Naive thymus-derived CD4-positive, alpha-beta T cell (primary cell): ENCODE measurements at regions of chr2 and their contacts with region 1.

Region 1: GRCh38 chr2:179218848-179219594 is 45.6 kb downstream of the SESTD1 start:
- DNase-seq: peak in 8 of 9 donors; percentile 12 to 53 (median 34)
- ATAC-seq: peak; percentile 72
- H3K4me3 ChIP-seq: no peak overlapping the region
- H3K4me3 Mint-ChIP-seq: no peak overlapping the region
- H3K27ac ChIP-seq: no peak overlapping the region
- H3K27ac Mint-ChIP-seq: no peak overlapping the region
- H3K4me1 ChIP-seq: no peaks in the 10 kb centered on the region
- H3K4me1 Mint-ChIP-seq: no peaks in the 10 kb centered on the region
- H3K27me3 ChIP-seq: no peaks in the 10 kb centered on the region
- H3K27me3 Mint-ChIP-seq: peaks cover 0 to 7% (median 0%) of the 10 kb centered on the region in 5 donors

Region 2: GRCh38 chr2:179193759-179194394 is 25.1 kb before region 1 on chr2:
- CTCF ChIA-PET with region 1: no interaction called
- POLR2A ChIA-PET with region 1: no interaction called
- intact Hi-C with region 1: loop called (anchors 2 kb)
- DNase-seq: no peak
- ATAC-seq: no peak
- H3K4me3 ChIP-seq: no peak overlapping the region
- H3K4me3 Mint-ChIP-seq: no peak overlapping the region
- H3K27ac ChIP-seq: no peak overlapping the region
- H3K27ac Mint-ChIP-seq: no peak overlapping the region
- H3K4me1 ChIP-seq: no peaks in the 10 kb centered on the region
- H3K4me1 Mint-ChIP-seq: peaks cover 0 to 11% (median 0%) of the 10 kb centered on the region in 7 donors
- H3K27me3 ChIP-seq: no peaks in the 10 kb centered on the region
- H3K27me3 Mint-ChIP-seq: no peaks in the 10 kb centered on the region

Region 3: GRCh38 chr2:179239195-179239594 is 20.2 kb after region 1 on chr2:
- CTCF ChIA-PET with region 1: interaction called, 5 read pairs
- POLR2A ChIA-PET with region 1: no interaction called
- intact Hi-C with region 1: loop called in 1 of 2 experiments (anchors 1 kb)
- DNase-seq: peak in 7 of 9 donors; percentile 0 to 32 (median 22)
- ATAC-seq: peak; percentile 48
- H3K4me3 ChIP-seq: no peak overlapping the region
- H3K4me3 Mint-ChIP-seq: peak overlapping the region in 3 of 10 donors; percentile 10 to 39 (median 18)
- H3K27ac ChIP-seq: no peak overlapping the region
- H3K27ac Mint-ChIP-seq: peak overlapping the region in 2 of 9 donors; percentile 35 to 73
- H3K4me1 ChIP-seq: peaks cover 0 to 4% of the 10 kb centered on the region in 2 donors
- H3K4me1 Mint-ChIP-seq: peaks cover 10 to 49% (median 21%) of the 10 kb centered on the region in 7 donors
- H3K27me3 ChIP-seq: no peaks in the 10 kb centered on the region
- H3K27me3 Mint-ChIP-seq: peaks cover 0 to 10% (median 5%) of the 10 kb centered on the region in 5 donors

Region 4: DNA sequence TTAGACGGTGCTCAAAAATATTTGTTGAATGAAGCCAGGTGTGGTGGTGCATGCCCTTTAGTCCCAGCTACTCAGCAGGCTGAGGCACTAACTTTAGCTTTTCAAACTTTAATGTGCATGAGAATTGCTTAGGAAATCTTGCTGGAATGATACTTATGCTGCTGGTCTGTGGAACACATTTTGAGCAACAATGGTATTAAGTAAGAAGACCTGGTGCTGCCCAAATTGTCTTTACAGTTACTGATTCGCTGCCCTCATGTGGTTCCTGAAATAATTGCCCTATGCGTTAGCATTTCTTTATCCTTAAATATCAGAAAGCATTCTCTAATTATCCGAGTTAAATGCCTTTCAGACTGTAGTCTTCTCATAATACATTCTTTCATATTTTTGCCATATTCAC is 121.6 kb after region 1 on chr2:
- CTCF ChIA-PET with region 1: interaction called, 4 read pairs
- POLR2A ChIA-PET with region 1: no interaction called
- intact Hi-C with region 1: loop called (anchors 1 kb)
- DNase-seq: no peak
- ATAC-seq: no peak
- H3K4me3 ChIP-seq: no peak overlapping the region
- H3K4me3 Mint-ChIP-seq: no peak overlapping the region
- H3K27ac ChIP-seq: no peak overlapping the region
- H3K27ac Mint-ChIP-seq: no peak overlapping the region
- H3K4me1 ChIP-seq: no peaks in the 10 kb centered on the region
- H3K4me1 Mint-ChIP-seq: no peaks in the 10 kb centered on the region
- H3K27me3 ChIP-seq: no peaks in the 10 kb centered on the region
- H3K27me3 Mint-ChIP-seq: peaks cover 0 to under 1% (median 0%) of the 10 kb centered on the region in 5 donors

Region 5: GRCh38 chr2:179440642-179441251 is 221.7 kb after region 1 on chr2:
- CTCF ChIA-PET with region 1: interaction called, 13 read pairs
- POLR2A ChIA-PET with region 1: no interaction called
- intact Hi-C with region 1: loop called (anchors 1 kb)
- DNase-seq: peak in 6 of 9 donors; percentile 10 to 40 (median 30)
- ATAC-seq: no peak
- H3K4me3 ChIP-seq: no peak overlapping the region
- H3K4me3 Mint-ChIP-seq: no peak overlapping the region
- H3K27ac ChIP-seq: no peak overlapping the region
- H3K27ac Mint-ChIP-seq: no peak overlapping the region
- H3K4me1 ChIP-seq: no peaks in the 10 kb centered on the region
- H3K4me1 Mint-ChIP-seq: no peaks in the 10 kb centered on the region
- H3K27me3 ChIP-seq: no peaks in the 10 kb centered on the region
- H3K27me3 Mint-ChIP-seq: peaks cover 13 to 39% (median 26%) of the 10 kb centered on the region in 5 donors

Region 6: DNA sequence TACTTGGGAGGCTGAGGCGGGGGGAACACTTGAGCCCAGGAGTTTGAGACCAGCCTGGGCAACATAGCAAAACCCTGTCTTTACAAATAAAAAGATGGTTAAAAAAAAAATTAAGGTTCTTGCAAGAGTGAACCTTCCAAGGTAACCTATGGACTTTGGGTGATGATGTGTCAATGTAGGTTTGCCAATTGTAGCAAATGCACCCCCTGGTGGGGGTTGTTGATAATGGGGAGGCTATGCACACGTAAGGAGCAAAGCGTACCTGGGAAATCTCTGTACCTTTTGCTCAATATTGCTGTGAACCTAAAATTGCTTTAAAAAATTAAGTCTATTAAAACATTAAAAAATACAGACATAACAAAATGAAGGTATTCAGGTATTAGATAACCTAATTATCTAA is 717.6 kb after region 1 on chr2:
- CTCF ChIA-PET with region 1: interaction called, 3 read pairs
- POLR2A ChIA-PET with region 1: no interaction called
- intact Hi-C with region 1: loop called in 1 of 2 experiments (anchors 5 kb)
- DNase-seq: peak in 2 of 9 donors; percentile 5 to 22
- ATAC-seq: no peak
- H3K4me3 ChIP-seq: no peak overlapping the region
- H3K4me3 Mint-ChIP-seq: no peak overlapping the region
- H3K27ac ChIP-seq: no peak overlapping the region
- H3K27ac Mint-ChIP-seq: no peak overlapping the region
- H3K4me1 ChIP-seq: no peaks in the 10 kb centered on the region
- H3K4me1 Mint-ChIP-seq: no peaks in the 10 kb centered on the region
- H3K27me3 ChIP-seq: no peaks in the 10 kb centered on the region
- H3K27me3 Mint-ChIP-seq: no peaks in the 10 kb centered on the region